Endothelial cell of umbilical vein (primary cell): ENCODE measurements at regions of chr3 and their contacts with region 1.

Region 1: GRCh38 chr3:57169872-57170623 is 4.9 kb upstream of the IL17RD start:
- DNase-seq: peak; percentile 67
- H3K4me3 ChIP-seq: peak overlapping the region; percentile 39 to 59 (median 52)
- H3K27ac ChIP-seq: no peak overlapping the region
- H3K4me1 ChIP-seq: no peaks in the 10 kb centered on the region
- H3K27me3 ChIP-seq: peaks cover 31 to 34% of the 10 kb centered on the region in 2 experiments
- CTCF ChIP-seq: peak; percentile 84 to 86
- POLR2A ChIP-seq: no peak

Region 2: GRCh38 chr3:57100046-57100695 is 69.9 kb before region 1 on chr3:
- CTCF ChIA-PET with region 1: interaction called, 8 read pairs
- POLR2A ChIA-PET with region 1: no interaction called
- dilution Hi-C with region 1: no loop called
- intact Hi-C with region 1: loop called (anchors 1 kb)
- DNase-seq: peak; percentile 83
- H3K4me3 ChIP-seq: no peak overlapping the region
- H3K27ac ChIP-seq: no peak overlapping the region
- H3K4me1 ChIP-seq: peaks cover 6% of the 10 kb centered on the region
- H3K27me3 ChIP-seq: no peaks in the 10 kb centered on the region
- CTCF ChIP-seq: peak; percentile 77 to 80
- POLR2A ChIP-seq: no peak

Region 3: DNA sequence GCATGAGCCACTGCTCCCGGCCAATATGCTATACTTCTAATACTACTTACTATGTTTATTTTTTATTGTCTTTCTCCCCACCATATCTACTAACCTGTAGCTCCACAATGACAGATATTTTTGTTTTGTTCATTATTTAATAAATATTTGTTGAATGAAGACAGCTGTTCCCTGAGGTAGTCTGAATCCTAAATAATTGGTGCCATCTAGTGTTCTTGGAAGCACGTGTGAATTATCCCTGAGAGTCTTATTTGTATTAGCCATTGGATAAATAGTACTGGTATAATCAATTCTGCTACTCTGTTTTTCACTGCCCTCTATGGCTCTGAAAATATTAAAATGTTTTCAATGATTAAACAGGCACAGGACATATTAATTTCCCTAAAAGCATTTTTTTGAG is 51.8 kb after region 1 on chr3:
- CTCF ChIA-PET with region 1: interaction called, 12 read pairs
- POLR2A ChIA-PET with region 1: no interaction called
- dilution Hi-C with region 1: no loop called
- intact Hi-C with region 1: loop called (anchors 2 kb)
- DNase-seq: peak; percentile 37
- H3K4me3 ChIP-seq: no peak overlapping the region
- H3K27ac ChIP-seq: no peak overlapping the region
- H3K4me1 ChIP-seq: peaks cover 4% of the 10 kb centered on the region
- H3K27me3 ChIP-seq: no peaks in the 10 kb centered on the region
- CTCF ChIP-seq: no peak
- POLR2A ChIP-seq: no peak

Region 4: DNA sequence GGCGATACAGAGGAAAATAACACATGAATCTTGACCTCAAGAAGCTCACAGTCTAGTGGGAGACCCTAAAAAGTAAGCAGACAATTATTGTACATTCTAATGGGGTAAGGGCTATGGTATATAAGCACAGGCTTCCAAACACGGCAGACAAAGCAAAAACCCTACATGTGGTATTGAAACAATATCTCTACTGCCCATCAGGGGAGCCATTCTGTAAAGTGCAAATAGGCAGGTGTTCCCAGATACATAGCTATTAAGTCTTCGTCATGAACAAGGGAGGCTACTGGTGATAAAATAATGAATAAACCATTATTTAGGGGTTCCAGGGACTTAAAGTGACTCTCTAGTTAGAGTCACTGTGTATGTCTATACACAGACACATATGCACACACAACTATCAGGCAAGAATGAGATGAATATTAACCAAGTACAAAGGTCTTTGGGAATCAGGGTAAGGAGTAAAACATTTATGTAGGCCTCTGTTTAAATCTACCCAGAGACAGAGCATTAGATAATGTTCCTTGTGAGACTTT is 161.1 kb after region 1 on chr3:
- CTCF ChIA-PET with region 1: no interaction called
- POLR2A ChIA-PET with region 1: no interaction called
- dilution Hi-C with region 1: no loop called
- intact Hi-C with region 1: loop called (anchors 10 kb)
- DNase-seq: no peak
- H3K4me3 ChIP-seq: no peak overlapping the region
- H3K27ac ChIP-seq: no peak overlapping the region
- H3K4me1 ChIP-seq: no peaks in the 10 kb centered on the region
- H3K27me3 ChIP-seq: peaks cover 11 to 13% of the 10 kb centered on the region in 2 experiments
- CTCF ChIP-seq: no peak
- POLR2A ChIP-seq: no peak

Region 5: GRCh38 chr3:57500506-57500905 is 330.5 kb after region 1 on chr3:
- CTCF ChIA-PET with region 1: no interaction called
- POLR2A ChIA-PET with region 1: no interaction called
- dilution Hi-C with region 1: no loop called
- intact Hi-C with region 1: no loop called
- DNase-seq: peak; percentile 59
- H3K4me3 ChIP-seq: no peak overlapping the region
- H3K27ac ChIP-seq: no peak overlapping the region
- H3K4me1 ChIP-seq: peaks cover 4% of the 10 kb centered on the region
- H3K27me3 ChIP-seq: no peaks in the 10 kb centered on the region
- CTCF ChIP-seq: no peak
- POLR2A ChIP-seq: no peak

Region 6: DNA sequence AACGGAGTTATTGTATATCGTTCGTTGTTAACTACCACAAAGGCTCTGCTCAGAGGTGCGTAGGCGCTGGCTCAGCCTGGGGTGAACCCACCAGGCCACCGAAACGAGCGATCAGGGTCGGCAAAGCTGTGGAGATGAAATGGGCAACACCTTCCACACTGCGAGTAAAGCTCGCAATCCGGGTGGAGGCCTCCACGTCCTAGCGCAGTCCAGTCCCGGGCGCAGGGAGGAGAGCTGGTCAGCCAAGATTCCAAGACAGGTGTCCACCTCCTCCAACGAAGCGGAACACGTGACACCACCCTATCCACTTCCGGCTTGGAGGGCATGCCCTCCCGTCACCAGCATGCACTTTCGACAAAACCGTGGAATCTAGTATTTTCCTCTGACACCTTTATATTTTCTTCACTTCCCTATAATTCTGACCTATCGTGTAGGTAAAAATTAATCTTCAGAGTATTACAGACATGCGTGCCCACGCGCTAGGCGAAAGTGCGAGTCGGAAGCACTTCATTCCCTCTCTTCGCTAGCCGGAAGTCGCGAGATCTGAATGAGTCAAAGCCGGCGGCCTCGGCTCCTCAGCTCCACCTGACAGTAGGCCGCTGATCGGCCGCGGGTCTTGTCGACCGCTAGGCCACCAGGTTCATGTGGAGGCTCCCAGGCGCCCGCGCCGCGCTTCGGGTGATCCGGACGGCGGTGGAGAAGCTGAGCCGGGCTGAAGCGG is 385.9 kb after region 1 on chr3 and contains the start of gene PDE12:
- CTCF ChIA-PET with region 1: no interaction called
- POLR2A ChIA-PET with region 1: no interaction called
- dilution Hi-C with region 1: no loop called
- intact Hi-C with region 1: loop called (anchors 10 kb)
- DNase-seq: peak; percentile 89
- H3K4me3 ChIP-seq: peak within 1 kb of the TSS; percentile 44 to 84 (median 48)
- H3K27ac ChIP-seq: peak within 1 kb of the TSS; percentile 81
- H3K4me1 ChIP-seq: peaks cover 16% of the 10 kb centered on the region
- H3K27me3 ChIP-seq: no peaks in the 10 kb centered on the region
- CTCF ChIP-seq: no peak
- POLR2A ChIP-seq: peak; percentile 90
- total RNA-seq, gene PDE12: 19.0 and 20.4 TPM in 2 replicates